Tibial artery (tissue), 4 donors: ENCODE measurements at regions of chr7 and their contacts with region 1.

Region 1: DNA sequence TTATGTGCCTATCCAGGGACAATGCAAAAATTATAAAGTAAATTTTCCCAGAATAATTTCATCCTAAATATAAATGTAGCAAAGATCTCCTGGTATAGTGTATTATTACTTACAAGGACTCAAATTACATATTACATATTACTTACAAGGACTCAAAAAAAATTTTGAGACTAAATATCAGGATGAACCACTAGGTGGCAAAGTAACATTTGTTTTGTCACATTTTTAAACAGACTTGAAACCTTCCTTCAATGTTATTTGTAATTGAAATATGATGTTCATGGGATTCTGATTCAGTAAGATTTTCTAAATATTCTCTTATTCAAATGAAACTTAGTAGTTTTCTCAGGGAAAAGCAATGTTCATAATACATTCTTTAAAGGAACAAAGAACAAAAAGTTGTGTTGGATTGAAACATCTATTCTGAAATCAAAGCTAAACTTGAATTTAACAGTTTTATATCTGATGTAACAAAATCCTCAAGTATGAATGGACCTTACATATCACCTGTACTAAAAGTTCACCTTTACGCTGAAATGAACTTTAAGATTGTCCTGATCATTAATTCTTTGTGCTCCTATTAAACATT is 74.3 kb upstream of the GNAI1 start:
- DNase-seq: no peak
- H3K4me3 ChIP-seq: no peak overlapping the region
- H3K27ac ChIP-seq: no peak overlapping the region
- H3K4me1 ChIP-seq: no peaks in the 10 kb centered on the region
- H3K27me3 ChIP-seq: no peaks in the 10 kb centered on the region
- CTCF ChIP-seq: peak in 1 of 2 experiments; percentile 44

Region 2: DNA sequence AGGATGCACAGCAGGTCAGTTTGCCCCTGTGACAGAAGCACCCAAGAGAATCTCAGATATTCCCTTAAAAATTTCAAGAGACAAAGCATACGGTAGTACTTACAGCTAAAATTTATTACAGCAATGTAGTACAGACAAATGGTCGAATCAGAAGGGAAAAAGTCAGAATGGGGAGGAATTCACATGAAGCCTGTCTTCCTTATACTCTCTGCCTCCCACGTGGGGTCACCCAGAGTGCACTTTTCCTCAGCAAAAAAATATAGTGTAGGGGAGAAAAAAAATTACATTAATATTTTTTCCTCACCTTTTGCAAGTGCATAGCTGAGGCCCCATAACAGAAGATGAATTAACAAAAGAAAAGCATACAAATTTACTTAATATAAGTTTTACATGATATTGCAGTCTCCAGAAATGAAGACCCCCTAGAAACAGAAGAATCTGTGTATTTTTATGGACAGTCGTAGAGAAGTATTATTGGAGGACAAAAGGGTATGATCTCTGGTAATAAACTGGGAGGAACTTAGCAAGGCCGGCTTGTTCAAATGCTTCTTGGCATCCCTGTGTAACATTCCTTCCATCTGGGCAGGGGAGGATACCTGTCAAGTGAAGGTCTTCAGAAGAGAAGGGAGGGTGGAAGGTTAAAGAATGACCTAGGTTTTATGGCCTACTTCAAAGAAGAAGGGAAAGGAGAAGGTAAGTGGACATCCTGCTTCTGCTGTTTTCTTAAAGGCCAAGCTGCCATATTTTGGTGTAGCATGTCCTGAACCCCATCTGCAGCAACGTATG is 336.3 kb before region 1 on chr7:
- intact Hi-C with region 1: no loop called
- DNase-seq: no peak
- H3K4me3 ChIP-seq: no peak overlapping the region
- H3K27ac ChIP-seq: no peak overlapping the region
- H3K4me1 ChIP-seq: no peaks in the 10 kb centered on the region
- H3K27me3 ChIP-seq: no peaks in the 10 kb centered on the region
- CTCF ChIP-seq: no peak

Region 3: DNA sequence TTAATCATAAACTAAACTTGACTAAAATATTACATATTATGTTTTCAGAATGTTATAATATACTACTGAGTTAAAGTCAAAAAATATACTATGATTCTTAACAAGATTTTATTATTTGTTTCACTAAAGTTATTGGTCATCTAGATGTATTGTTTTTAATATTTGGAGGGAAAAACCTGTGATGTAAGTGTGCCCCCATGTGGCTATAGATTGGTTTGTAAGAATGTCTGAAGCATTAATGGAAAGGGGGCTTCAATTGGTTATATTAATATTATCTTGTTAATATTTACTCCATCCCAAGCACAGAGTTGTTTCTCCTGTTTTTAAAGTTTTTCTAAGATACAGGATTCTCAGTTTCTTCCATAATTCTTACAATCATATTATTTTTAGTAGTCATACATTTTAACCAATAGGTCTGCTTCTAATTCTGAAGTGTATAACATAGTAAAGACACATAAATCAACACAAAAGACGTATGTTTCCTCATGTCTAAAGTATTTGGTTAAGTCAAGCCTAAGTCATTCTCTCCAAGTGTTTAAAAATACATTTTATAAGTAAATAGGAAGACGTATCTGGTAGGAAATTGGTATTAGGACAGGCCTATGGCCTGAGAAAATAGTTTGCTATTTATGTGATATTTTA is 393.5 kb after region 1 on chr7:
- intact Hi-C with region 1: loop called (anchors 10 kb)
- DNase-seq: no peak
- H3K4me3 ChIP-seq: no peak overlapping the region
- H3K27ac ChIP-seq: no peak overlapping the region
- H3K4me1 ChIP-seq: no peaks in the 10 kb centered on the region
- H3K27me3 ChIP-seq: no peaks in the 10 kb centered on the region
- CTCF ChIP-seq: peak; percentile 37 to 54